Endothelial cell of umbilical vein (primary cell): ENCODE measurements at regions of chr1 and their contacts with region 1.

Region 1: GRCh38 chr1:17653728-17654351 is 101.3 kb upstream of the ACTL8 start:
- DNase-seq: peak; percentile 25
- H3K4me3 ChIP-seq: no peak overlapping the region
- H3K27ac ChIP-seq: no peak overlapping the region
- H3K4me1 ChIP-seq: no peaks in the 10 kb centered on the region
- H3K27me3 ChIP-seq: no peaks in the 10 kb centered on the region
- CTCF ChIP-seq: peak; percentile 63 to 85
- POLR2A ChIP-seq: no peak

Region 2: GRCh38 chr1:17696417-17697301 is 42.8 kb after region 1 on chr1:
- CTCF ChIA-PET with region 1: interaction called, 115 read pairs
- POLR2A ChIA-PET with region 1: no interaction called
- dilution Hi-C with region 1: no loop called
- intact Hi-C with region 1: no loop called
- DNase-seq: peak; percentile 43
- H3K4me3 ChIP-seq: no peak overlapping the region
- H3K27ac ChIP-seq: no peak overlapping the region
- H3K4me1 ChIP-seq: no peaks in the 10 kb centered on the region
- H3K27me3 ChIP-seq: no peaks in the 10 kb centered on the region
- CTCF ChIP-seq: peak; percentile 25 to 51
- POLR2A ChIP-seq: no peak

Region 3: DNA sequence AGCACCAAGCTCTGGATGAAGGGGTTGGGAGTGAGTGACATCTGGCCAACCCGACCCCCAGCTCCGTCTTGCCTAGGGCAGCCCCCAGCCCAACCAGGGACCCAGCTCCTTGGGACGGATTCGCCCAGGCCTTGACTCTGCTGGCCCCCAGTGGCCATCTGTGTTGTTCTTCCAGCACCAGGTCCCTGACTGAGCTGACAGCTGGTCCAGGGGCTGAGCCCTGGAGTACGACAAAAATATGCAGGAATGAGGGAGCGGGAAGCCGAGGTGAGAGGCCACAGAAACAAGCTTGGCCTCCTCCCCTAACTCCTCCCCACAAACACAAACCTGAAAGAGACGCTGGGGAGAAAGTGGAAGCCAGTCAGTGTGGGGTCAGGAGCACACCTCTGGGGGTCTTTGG is 921.8 kb after region 1 on chr1:
- CTCF ChIA-PET with region 1: interaction called, 161 read pairs
- POLR2A ChIA-PET with region 1: no interaction called
- dilution Hi-C with region 1: no loop called
- intact Hi-C with region 1: no loop called
- DNase-seq: peak; percentile 18
- H3K4me3 ChIP-seq: no peak overlapping the region
- H3K27ac ChIP-seq: no peak overlapping the region
- H3K4me1 ChIP-seq: no peaks in the 10 kb centered on the region
- H3K27me3 ChIP-seq: no peaks in the 10 kb centered on the region
- CTCF ChIP-seq: peak; percentile 39 to 75
- POLR2A ChIP-seq: no peak

Region 4: GRCh38 chr1:18581420-18581880 is 927.6 kb after region 1 on chr1:
- CTCF ChIA-PET with region 1: interaction called, 161 read pairs
- POLR2A ChIA-PET with region 1: no interaction called
- dilution Hi-C with region 1: no loop called
- intact Hi-C with region 1: loop called (anchors 1 kb)
- DNase-seq: peak; percentile 8
- H3K4me3 ChIP-seq: no peak overlapping the region
- H3K27ac ChIP-seq: no peak overlapping the region
- H3K4me1 ChIP-seq: no peaks in the 10 kb centered on the region
- H3K27me3 ChIP-seq: no peaks in the 10 kb centered on the region
- CTCF ChIP-seq: peak; percentile 68 to 84
- POLR2A ChIP-seq: no peak

Region 5: GRCh38 chr1:18820791-18821641 is 1167.2 kb after region 1 on chr1:
- CTCF ChIA-PET with region 1: interaction called, 3 read pairs
- POLR2A ChIA-PET with region 1: no interaction called
- dilution Hi-C with region 1: no loop called
- intact Hi-C with region 1: loop called (anchors 2 kb)
- DNase-seq: peak; percentile 56
- H3K4me3 ChIP-seq: no peak overlapping the region
- H3K27ac ChIP-seq: no peak overlapping the region
- H3K4me1 ChIP-seq: no peaks in the 10 kb centered on the region
- H3K27me3 ChIP-seq: peaks cover 3% of the 10 kb centered on the region in 2 experiments
- CTCF ChIP-seq: peak; percentile 91 to 96
- POLR2A ChIP-seq: no peak